PC-3 (cell line): ENCODE measurements at regions of chr3 and their contacts with region 1.

Region 1: GRCh38 chr3:146503461-146504202 is 34.3 kb upstream of the PLSCR2 start:
- DNase-seq: peak; percentile 96
- ATAC-seq: peak; percentile 78
- H3K4me3 ChIP-seq: peak overlapping the region; percentile 46; the same call in 1 of the 2 replicates
- H3K27ac ChIP-seq: peak overlapping the region; percentile 97
- H3K4me1 ChIP-seq: peaks cover 56% of the 10 kb centered on the region
- H3K27me3 ChIP-seq: no peaks in the 10 kb centered on the region
- CTCF ChIP-seq: peak; percentile 52

Region 2: DNA sequence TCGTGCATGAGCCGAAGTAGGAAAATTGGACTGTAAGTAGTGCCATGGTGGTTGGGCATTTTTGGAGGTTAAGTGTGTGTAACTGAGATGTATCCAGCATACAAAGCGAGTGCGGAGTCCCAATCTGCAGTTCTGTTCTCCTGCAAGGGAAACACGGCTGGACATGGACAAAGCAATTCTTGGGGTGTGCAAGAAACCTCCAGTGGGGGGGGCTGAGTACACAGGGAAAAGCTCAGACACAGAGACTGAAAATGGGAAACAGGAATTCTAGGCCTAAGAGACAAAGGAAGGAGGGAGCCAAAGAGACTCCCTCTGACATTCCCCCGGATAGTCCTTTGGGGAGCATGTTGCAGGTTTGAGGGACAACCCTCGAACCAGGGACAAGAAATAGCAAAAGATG is 169.5 kb before region 1 on chr3:
- CTCF ChIA-PET with region 1: no interaction called
- POLR2A ChIA-PET with region 1: no interaction called
- intact Hi-C with region 1: loop called (anchors 5 kb)
- DNase-seq: peak; percentile 60
- ATAC-seq: peak; percentile 70
- H3K4me3 ChIP-seq: no peak overlapping the region
- H3K27ac ChIP-seq: no peak overlapping the region
- H3K4me1 ChIP-seq: no peaks in the 10 kb centered on the region
- H3K27me3 ChIP-seq: no peaks in the 10 kb centered on the region
- CTCF ChIP-seq: peak; percentile 58

Region 3: GRCh38 chr3:146375219-146375618 is 128.4 kb before region 1 on chr3:
- CTCF ChIA-PET with region 1: no interaction called
- POLR2A ChIA-PET with region 1: no interaction called
- intact Hi-C with region 1: no loop called
- DNase-seq: no peak
- ATAC-seq: no peak
- H3K4me3 ChIP-seq: no peak overlapping the region
- H3K27ac ChIP-seq: no peak overlapping the region
- H3K4me1 ChIP-seq: peaks cover 3% of the 10 kb centered on the region; the same call in 1 of the 2 replicates
- H3K27me3 ChIP-seq: no peaks in the 10 kb centered on the region
- CTCF ChIP-seq: no peak

Region 4: GRCh38 chr3:146421889-146422288 is 81.7 kb before region 1 on chr3:
- CTCF ChIA-PET with region 1: interaction called, 6 read pairs
- POLR2A ChIA-PET with region 1: no interaction called
- intact Hi-C with region 1: loop called (anchors 2 kb)
- DNase-seq: peak; percentile 94
- ATAC-seq: peak; percentile 96
- H3K4me3 ChIP-seq: peak overlapping the region; percentile 24; the same call in 1 of the 2 replicates
- H3K27ac ChIP-seq: peak overlapping the region; percentile 89
- H3K4me1 ChIP-seq: peaks cover 30% of the 10 kb centered on the region
- H3K27me3 ChIP-seq: no peaks in the 10 kb centered on the region
- CTCF ChIP-seq: no peak

Region 5: DNA sequence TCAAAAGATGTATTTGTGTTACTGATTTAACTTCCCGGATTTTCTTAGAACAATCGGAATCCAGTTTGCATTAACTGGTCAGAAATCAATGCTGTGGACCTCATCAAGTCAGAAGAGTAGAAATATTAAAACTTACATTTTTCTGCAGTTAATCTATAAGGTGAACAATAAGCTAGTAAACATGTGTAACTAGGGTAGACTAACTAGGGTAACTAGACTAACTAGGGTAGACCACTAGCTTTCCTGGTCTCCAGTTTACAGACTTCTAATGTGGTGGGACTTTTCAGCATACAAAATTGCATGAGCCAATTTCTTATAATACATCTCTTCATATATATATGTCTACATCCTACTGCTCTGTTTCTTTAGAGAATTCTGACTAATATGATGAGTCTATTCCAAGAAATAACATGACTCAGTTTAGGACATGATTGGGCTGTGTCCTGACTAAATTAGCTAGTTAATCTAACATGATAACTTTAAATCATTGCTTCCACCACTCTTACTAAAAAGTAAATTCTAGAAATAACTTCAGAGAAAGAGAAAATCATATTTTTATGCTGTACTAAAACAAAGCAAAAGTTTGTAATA is 39.5 kb before region 1 on chr3:
- CTCF ChIA-PET with region 1: no interaction called
- POLR2A ChIA-PET with region 1: interaction called, 3 read pairs
- intact Hi-C with region 1: loop called (anchors 1 kb)
- DNase-seq: peak; percentile 76
- ATAC-seq: peak; percentile 45
- H3K4me3 ChIP-seq: no peak overlapping the region
- H3K27ac ChIP-seq: peak overlapping the region; percentile 35
- H3K4me1 ChIP-seq: peaks cover 55% of the 10 kb centered on the region
- H3K27me3 ChIP-seq: no peaks in the 10 kb centered on the region
- CTCF ChIP-seq: no peak

Region 6: DNA sequence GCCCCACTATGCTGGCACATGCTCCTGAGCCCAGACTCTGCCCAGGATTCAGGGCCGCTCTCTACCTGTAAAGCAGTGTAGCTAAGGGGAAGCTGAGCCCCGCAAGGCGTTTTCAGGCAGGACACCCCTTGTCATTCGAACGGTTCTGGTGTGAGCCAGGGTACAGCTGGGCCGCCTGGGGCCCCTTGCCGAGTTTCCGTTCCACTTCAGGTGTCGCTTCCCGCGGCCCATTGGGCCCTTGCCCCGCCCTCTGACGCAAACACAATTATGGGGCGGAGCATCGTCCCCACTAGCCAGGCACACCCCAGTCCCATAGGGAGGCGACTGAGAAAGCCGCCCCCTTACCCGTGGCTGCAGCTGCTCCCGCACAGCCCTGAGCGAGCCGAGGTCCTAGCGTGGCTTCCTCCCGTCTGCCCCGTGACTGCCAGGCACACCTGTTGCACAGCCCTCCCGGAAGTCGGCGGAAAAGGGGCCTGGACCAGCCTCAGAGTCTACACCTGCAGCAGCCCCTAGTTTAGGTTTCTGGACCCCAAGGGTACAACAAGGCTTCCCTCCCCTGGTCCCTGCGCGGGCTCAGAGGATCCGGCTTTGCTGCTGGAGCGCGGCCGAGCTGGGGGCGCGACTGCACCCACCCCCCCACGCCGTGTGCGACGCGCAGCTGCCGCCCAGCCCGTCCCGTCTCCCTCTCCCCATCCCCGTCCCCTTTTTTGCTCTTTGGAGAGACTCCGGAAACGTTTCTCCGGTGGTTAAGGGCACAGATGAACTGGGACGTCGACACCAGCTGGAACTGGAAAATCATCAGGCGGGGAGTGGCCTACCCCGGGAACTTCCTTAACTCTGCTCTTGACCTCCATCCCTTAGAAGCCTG is 34.2 kb before region 1 on chr3 and contains the start of gene PLSCR2:
- CTCF ChIA-PET with region 1: no interaction called
- POLR2A ChIA-PET with region 1: interaction called, 3 read pairs
- intact Hi-C with region 1: loop called (anchors 1 kb)
- DNase-seq: peak; percentile 69
- ATAC-seq: peak; percentile 70
- H3K4me3 ChIP-seq: peak within 1 kb of the TSS; percentile 61
- H3K27ac ChIP-seq: peak within 1 kb of the TSS; percentile 93
- H3K4me1 ChIP-seq: peaks cover 54% of the 10 kb centered on the region
- H3K27me3 ChIP-seq: no peaks in the 10 kb centered on the region
- CTCF ChIP-seq: no peak
- total RNA-seq, gene PLSCR2: 0.86 TPM in 1 of 2 replicates, not detected in the other

Region 7: DNA sequence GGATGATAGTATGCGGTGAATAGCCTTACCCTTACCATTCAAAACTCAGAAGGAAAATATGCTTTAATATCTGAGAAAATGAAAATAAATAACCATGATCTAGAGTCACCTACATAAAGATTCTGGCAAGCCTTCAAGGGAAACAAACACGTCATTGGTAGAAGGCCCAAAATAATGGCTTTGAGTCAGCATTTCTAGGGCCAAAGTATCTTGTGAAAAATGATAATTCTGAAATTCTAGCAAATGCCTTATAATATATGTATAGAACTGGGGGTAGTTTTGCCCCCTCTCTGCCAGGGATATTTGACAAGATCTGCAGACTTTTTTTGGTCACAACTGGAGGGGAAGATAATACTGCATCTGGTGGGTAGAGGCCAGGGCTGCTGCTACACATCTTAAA is 25.4 kb after region 1 on chr3:
- CTCF ChIA-PET with region 1: no interaction called
- POLR2A ChIA-PET with region 1: no interaction called
- intact Hi-C with region 1: loop called (anchors 2 kb)
- DNase-seq: peak; percentile 85
- ATAC-seq: peak; percentile 77
- H3K4me3 ChIP-seq: peak overlapping the region; percentile 58
- H3K27ac ChIP-seq: peak overlapping the region; percentile 68
- H3K4me1 ChIP-seq: peaks cover 29% of the 10 kb centered on the region
- H3K27me3 ChIP-seq: no peaks in the 10 kb centered on the region
- CTCF ChIP-seq: no peak

Region 8: GRCh38 chr3:146544002-146544928 is 40.6 kb after region 1 on chr3 and contains the start of gene PLSCR1:
- CTCF ChIA-PET with region 1: interaction called, 4 read pairs
- POLR2A ChIA-PET with region 1: no interaction called
- intact Hi-C with region 1: loop called (anchors 1 kb)
- DNase-seq: peak; percentile 98
- ATAC-seq: peak; percentile 84
- H3K4me3 ChIP-seq: peak within 1 kb of the TSS; percentile 92
- H3K27ac ChIP-seq: peak within 1 kb of the TSS; percentile 89
- H3K4me1 ChIP-seq: peaks cover 32% of the 10 kb centered on the region
- H3K27me3 ChIP-seq: no peaks in the 10 kb centered on the region
- CTCF ChIP-seq: no peak
- total RNA-seq, gene PLSCR1: 31.4 and 48.8 TPM in 2 replicates